CD4-positive, alpha-beta memory T cell (primary cell): ENCODE measurements at regions of chr10 and their contacts with region 1.

Region 1: DNA sequence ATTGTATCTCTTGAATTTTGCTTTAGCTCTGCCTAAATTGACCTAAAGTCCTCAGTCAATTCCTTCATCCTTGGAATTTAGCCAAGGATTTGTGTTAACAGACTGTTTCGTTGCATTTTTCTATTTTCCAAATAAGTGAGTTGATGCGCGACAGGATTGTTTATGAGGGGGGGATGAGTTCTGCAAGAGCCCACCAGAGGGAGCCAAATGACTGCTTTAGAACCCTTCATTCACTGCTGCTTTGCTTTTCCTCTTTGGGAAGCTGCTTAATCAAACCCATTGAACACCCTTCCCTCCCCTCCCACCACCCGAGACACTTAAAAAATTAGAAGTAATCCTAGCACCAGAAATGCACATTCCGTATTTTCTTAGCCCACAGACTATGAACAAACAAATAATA is 33.7 kb upstream of the PTF1A start:
- DNase-seq: peak in 4 of 5 donors; percentile 15 to 32 (median 18)
- H3K4me3 ChIP-seq: no peak overlapping the region
- H3K4me3 Mint-ChIP-seq: no peak overlapping the region
- H3K27ac ChIP-seq: no peak overlapping the region
- H3K27ac Mint-ChIP-seq: no peak overlapping the region
- H3K4me1 ChIP-seq: peaks cover 4% of the 10 kb centered on the region
- H3K4me1 Mint-ChIP-seq: peaks cover 0 to 7% (median 3%) of the 10 kb centered on the region in 4 donors
- H3K27me3 ChIP-seq: no peaks in the 10 kb centered on the region
- H3K27me3 Mint-ChIP-seq: peaks cover 20 to 27% of the 10 kb centered on the region in 2 donors

Region 2: DNA sequence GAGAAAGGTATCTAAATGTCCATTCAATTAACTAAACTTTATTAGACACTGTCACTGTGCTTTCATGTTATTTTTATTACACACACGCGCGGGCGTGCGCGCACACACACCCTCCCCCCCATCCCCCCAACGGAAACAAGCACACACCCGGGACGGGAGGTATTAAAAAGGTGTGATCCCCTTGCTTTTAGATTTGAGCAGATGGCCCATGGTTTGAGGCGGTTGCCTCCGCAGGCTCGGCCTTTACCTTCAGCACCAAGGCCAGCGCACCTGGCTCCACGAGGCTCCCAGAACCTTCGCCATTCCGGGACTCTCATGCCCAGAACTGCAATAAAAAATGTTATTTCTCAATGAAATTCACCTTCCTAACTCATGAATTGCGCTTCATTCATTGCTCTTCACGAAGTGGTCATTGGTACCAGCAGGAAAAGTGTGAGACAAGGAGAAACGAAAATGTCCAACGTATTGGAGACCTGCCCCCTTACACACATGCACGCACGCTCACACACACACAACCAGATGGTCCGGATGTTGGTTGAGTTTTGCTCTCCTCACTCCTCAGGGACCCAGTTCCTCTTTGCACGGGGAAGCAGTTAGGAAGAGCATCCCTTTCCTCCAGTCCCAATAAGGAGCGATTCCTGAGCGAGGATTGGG is 13.0 kb after region 1 on chr10:
- CTCF ChIA-PET with region 1: interaction called, 23 read pairs
- POLR2A ChIA-PET with region 1: no interaction called
- intact Hi-C with region 1: no loop called
- DNase-seq: no peak
- H3K4me3 ChIP-seq: no peak overlapping the region
- H3K4me3 Mint-ChIP-seq: peak overlapping the region in 1 of 8 donors; percentile 14
- H3K27ac ChIP-seq: no peak overlapping the region
- H3K27ac Mint-ChIP-seq: no peak overlapping the region
- H3K4me1 ChIP-seq: no peaks in the 10 kb centered on the region
- H3K4me1 Mint-ChIP-seq: peaks cover 3 to 6% (median 5%) of the 10 kb centered on the region in 4 donors
- H3K27me3 ChIP-seq: no peaks in the 10 kb centered on the region
- H3K27me3 Mint-ChIP-seq: peaks cover 33 to 42% of the 10 kb centered on the region in 2 donors

Region 3: DNA sequence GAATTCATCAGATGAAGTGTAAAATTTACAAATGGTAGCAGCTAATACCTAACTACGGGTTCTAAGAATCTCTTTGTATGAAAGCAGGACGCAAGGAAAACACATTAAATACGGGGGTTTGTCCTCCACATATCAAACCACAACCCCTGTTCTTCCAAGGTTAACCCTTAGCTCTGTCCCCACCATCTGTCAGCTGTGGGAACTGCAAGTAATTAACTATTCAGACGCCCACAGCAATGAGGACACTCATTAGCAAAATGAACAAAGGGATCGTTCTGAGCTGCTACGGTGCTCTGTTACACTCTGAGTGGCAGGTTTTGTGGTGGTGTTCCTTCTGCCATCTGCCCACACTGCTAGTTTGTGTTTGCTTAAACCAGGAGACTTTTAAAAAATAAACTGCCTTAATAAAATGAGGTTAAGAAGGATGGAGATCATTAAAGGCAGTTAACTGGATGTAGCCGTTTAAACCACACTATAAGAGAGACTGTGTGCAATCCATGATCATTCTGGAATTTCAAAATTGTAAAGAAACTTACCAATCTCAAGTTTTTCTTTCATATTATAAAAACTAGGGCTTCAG is 134.9 kb after region 1 on chr10:
- CTCF ChIA-PET with region 1: interaction called, 11 read pairs
- POLR2A ChIA-PET with region 1: no interaction called
- intact Hi-C with region 1: loop called (anchors 2 kb)
- DNase-seq: peak in 4 of 5 donors; percentile 9 to 19 (median 12)
- H3K4me3 ChIP-seq: no peak overlapping the region
- H3K4me3 Mint-ChIP-seq: no peak overlapping the region
- H3K27ac ChIP-seq: no peak overlapping the region
- H3K27ac Mint-ChIP-seq: no peak overlapping the region
- H3K4me1 ChIP-seq: no peaks in the 10 kb centered on the region
- H3K4me1 Mint-ChIP-seq: peaks cover 0 to 3% (median 0%) of the 10 kb centered on the region in 4 donors
- H3K27me3 ChIP-seq: no peaks in the 10 kb centered on the region
- H3K27me3 Mint-ChIP-seq: peaks cover 8 to 19% of the 10 kb centered on the region in 2 donors

Region 4: DNA sequence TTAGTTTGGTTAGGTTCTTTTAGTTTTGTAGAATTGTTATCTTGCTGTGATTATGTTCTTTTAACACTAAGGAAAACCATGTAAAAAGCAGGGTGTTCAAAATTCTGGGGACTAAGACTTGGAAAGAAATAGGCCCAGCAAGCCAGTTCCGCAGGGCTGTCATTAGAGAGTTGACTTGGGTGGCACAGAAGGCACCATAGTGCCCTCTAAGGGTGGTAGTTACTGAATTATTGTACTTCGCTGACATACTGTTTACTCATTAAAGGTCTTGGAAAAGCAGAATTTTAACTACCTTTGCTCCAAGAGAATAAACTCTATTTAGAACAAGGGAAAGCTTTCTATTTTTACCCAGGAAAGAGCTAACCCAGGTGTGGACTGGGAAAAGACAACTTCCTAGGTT is 367.0 kb after region 1 on chr10:
- CTCF ChIA-PET with region 1: interaction called, 6 read pairs
- POLR2A ChIA-PET with region 1: no interaction called
- intact Hi-C with region 1: loop called (anchors 2 kb)
- DNase-seq: peak in 4 of 5 donors; percentile 8 to 23 (median 14)
- H3K4me3 ChIP-seq: no peak overlapping the region
- H3K4me3 Mint-ChIP-seq: no peak overlapping the region
- H3K27ac ChIP-seq: no peak overlapping the region
- H3K27ac Mint-ChIP-seq: peak overlapping the region in 1 of 7 donors; percentile 5
- H3K4me1 ChIP-seq: no peaks in the 10 kb centered on the region
- H3K4me1 Mint-ChIP-seq: no peaks in the 10 kb centered on the region
- H3K27me3 ChIP-seq: no peaks in the 10 kb centered on the region
- H3K27me3 Mint-ChIP-seq: peaks cover 0 to 4% of the 10 kb centered on the region in 2 donors

Region 5: GRCh38 chr10:23702977-23703414 is 544.6 kb after region 1 on chr10:
- CTCF ChIA-PET with region 1: no interaction called
- POLR2A ChIA-PET with region 1: no interaction called
- intact Hi-C with region 1: loop called (anchors 2 kb)
- DNase-seq: peak; percentile 42 to 49 (median 44)
- H3K4me3 ChIP-seq: no peak overlapping the region
- H3K4me3 Mint-ChIP-seq: peak overlapping the region in 2 of 8 donors; percentile 27 to 32
- H3K27ac ChIP-seq: no peak overlapping the region
- H3K27ac Mint-ChIP-seq: no peak overlapping the region
- H3K4me1 ChIP-seq: no peaks in the 10 kb centered on the region
- H3K4me1 Mint-ChIP-seq: peaks cover 0 to 2% (median 0%) of the 10 kb centered on the region in 4 donors
- H3K27me3 ChIP-seq: no peaks in the 10 kb centered on the region
- H3K27me3 Mint-ChIP-seq: peaks cover 15 to 17% of the 10 kb centered on the region in 2 donors

Region 6: DNA sequence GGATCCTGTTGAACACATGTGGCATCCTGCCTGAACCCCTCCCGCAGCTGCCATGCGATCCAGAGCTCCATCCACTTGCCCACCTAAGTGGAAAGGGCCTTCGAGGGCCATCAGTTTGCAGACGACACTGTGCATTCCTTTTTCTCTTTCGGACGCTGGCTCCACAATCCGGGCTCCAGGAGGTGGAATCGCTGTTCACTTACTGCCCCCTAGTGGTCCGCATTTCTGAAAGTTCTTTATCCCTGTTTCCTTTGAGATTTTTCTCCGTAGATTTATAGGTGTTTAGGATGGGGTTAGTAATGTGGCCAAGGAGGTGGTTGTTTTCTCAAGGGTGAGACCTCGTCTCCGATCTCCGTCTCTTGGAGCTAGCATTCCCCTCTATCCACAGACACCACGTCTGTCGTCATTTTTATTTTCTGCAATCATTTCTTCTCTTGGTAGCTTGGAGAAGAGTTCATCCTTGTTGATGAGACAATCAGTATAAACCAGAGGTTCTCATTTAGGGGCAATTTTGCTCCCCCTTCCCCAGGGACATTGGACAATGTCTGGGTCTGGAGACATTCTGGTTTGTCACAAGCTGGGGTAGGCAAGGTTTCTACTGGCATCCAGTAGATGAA is 1360.7 kb after region 1 on chr10:
- CTCF ChIA-PET with region 1: no interaction called
- POLR2A ChIA-PET with region 1: no interaction called
- intact Hi-C with region 1: loop called (anchors 2 kb)
- DNase-seq: peak; percentile 12 to 42 (median 19)
- H3K4me3 ChIP-seq: no peak overlapping the region
- H3K4me3 Mint-ChIP-seq: peak overlapping the region in 7 of 8 donors; percentile 10 to 78 (median 51)
- H3K27ac ChIP-seq: no peak overlapping the region
- H3K27ac Mint-ChIP-seq: no peak overlapping the region
- H3K4me1 ChIP-seq: peaks cover 12% of the 10 kb centered on the region
- H3K4me1 Mint-ChIP-seq: peaks cover 8 to 15% (median 12%) of the 10 kb centered on the region in 4 donors
- H3K27me3 ChIP-seq: no peaks in the 10 kb centered on the region
- H3K27me3 Mint-ChIP-seq: no peaks in the 10 kb centered on the region